ENCODE measurements at regions of chr13 and their contacts with region 1.

Region 1: DNA sequence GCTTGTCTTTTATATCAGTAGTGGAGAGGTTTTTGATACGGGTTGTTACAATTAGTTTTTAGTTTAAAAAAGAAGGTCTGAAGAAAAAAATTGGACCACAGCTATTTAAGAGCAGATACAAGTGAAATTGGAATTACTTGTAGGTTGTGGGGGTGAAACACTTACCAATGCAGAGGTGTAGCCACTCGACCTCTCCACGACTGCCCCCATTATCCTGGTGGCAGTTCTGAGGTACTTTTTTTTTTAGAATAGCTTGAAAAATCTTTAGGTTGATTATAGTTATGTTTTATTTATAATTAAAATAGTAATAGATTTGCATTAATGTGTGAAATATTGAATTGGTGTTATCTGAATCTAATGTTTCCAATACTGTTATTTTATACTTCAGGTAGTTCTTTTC is 60.7 kb downstream of the PAN3 start:
- DNase-seq: no peak
- ATAC-seq: no peak
- H3K4me3 Mint-ChIP-seq: no peak overlapping the region
- H3K27ac Mint-ChIP-seq: no peak overlapping the region
- H3K4me1 Mint-ChIP-seq: peaks cover 3% of the 10 kb centered on the region
- H3K27me3 Mint-ChIP-seq: no peaks in the 10 kb centered on the region
- CTCF ChIP-seq: no peak

Region 2: DNA sequence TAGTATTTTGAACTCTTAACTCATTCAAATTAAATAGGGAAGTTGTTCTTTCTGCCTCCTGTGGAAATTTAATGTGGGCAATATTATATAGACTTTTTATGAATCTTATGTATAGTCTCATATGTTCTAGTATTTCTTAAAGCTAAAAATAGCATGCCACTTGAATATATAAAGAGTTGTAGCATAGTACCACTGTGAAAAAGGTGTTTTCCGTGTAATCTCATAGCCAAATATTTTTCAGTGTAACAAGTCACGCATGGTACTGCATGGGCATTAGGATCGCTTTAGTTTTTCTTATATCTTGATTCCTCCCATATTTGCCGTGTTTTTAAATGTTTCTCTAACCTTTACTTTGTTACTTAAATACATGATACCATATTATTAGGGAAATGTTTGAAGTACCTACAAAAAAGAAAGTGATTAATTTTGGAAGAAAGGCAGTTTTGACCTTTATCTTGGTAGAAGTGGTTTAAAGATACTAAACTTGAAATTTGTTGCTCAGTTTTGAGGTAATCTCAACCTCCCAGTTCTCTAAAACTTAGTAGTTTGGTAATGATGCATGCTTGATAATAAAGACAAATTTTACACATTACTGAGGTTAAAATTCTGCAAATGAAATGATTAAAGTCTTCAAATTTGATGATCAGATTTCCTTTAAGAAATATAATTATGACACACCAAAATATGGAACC is 20.5 kb after region 1 on chr13:
- CTCF ChIA-PET with region 1: no interaction called
- POLR2A ChIA-PET with region 1: no interaction called
- intact Hi-C with region 1: loop called (anchors 1 kb)
- DNase-seq: no peak
- ATAC-seq: no peak
- H3K4me3 Mint-ChIP-seq: no peak overlapping the region
- H3K27ac Mint-ChIP-seq: no peak overlapping the region
- H3K4me1 Mint-ChIP-seq: peaks cover 16% of the 10 kb centered on the region
- H3K27me3 Mint-ChIP-seq: no peaks in the 10 kb centered on the region
- CTCF ChIP-seq: no peak

Region 3: DNA sequence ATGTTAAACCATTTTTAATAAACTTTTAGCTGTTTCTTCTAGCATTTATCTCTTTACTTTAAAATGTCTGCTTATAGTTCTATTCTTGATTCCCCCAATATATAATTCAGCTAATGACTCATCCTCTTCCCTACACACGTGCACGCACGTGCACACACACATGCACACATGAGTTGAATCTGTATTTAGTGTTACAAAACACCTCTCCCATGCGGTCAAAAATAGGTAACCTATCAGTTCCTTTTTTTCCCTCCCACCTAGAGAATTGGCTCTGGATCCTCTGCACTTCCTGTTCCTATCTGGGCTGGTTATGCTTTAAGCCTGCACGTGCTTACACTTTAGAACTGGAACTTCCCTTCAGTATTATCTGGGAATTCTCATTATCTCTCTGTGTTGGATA is 83.4 kb after region 1 on chr13:
- CTCF ChIA-PET with region 1: no interaction called
- POLR2A ChIA-PET with region 1: no interaction called
- intact Hi-C with region 1: no loop called
- DNase-seq: no peak
- ATAC-seq: no peak
- H3K4me3 Mint-ChIP-seq: no peak overlapping the region
- H3K27ac Mint-ChIP-seq: no peak overlapping the region
- H3K4me1 Mint-ChIP-seq: peaks cover 8% of the 10 kb centered on the region
- H3K27me3 Mint-ChIP-seq: no peaks in the 10 kb centered on the region
- CTCF ChIP-seq: no peak

Region 4: DNA sequence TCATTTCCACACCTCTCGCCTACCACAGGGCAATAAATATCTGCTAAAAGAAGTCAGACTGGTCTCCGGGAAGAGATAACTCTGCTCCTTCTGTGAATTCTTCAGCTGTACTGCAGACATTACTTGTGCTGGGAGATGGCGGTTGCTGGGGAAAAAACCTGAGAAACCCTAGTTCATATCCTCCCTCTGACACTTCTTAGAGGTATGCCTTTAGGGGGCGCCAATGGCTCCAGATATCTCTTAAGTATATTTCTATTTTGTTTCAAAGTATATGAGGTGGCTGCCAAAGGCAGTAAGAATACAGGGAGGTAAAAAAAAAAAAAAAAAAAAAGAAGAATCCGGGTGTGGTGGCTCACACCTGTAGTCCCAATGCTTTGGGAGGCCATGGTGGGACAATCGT is 114.5 kb after region 1 on chr13:
- CTCF ChIA-PET with region 1: no interaction called
- POLR2A ChIA-PET with region 1: no interaction called
- intact Hi-C with region 1: no loop called
- DNase-seq: no peak
- ATAC-seq: no peak
- H3K4me3 Mint-ChIP-seq: no peak overlapping the region
- H3K27ac Mint-ChIP-seq: no peak overlapping the region
- H3K4me1 Mint-ChIP-seq: no peaks in the 10 kb centered on the region
- H3K27me3 Mint-ChIP-seq: no peaks in the 10 kb centered on the region
- CTCF ChIP-seq: no peak